Sigmoid colon (tissue), 7 donors: ENCODE measurements at regions of chr14 and their contacts with region 1.

Region 1: DNA sequence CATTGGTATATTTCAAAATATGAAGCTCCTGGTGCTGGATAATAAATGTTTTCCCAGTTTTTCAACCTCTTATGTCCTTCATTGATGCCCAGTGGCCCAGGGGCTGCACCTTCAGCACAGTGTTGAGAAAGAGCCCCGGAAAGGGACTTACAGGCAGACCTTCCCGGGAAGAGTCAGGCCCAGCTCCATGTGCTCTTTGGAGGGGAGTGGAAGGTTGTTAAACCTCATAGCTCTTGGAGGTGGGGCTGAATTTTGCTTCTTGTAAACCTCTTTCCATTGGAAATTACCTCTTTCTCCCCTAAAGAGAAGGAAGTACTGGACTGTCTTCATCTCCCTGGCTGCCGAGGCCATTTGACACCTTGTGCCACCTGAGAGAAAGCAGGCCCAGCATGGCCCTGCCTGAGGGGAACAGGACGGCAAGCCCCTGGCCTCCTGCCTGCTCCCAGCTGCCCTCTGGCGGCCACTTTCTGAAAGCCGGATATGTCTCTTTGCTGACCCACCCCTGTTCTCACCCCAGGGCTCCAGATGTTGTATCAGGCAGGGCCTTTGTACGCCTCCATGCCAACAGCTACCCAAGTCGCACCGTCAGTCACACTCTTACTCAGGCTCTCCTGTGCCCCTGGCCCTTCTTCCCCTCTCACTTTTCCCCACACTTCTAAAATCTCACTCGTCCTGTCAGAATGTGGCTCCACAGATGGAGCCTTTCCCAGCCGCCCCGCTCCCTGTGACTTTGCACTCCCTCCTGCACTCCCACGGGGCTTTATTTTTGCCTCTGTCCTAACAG is 43.0 kb downstream of the EVL start:
- DNase-seq: peak; percentile 88
- H3K4me3 ChIP-seq: no peak overlapping the region
- H3K27ac ChIP-seq: no peak overlapping the region
- H3K4me1 ChIP-seq: peaks cover 0 to 67% (median 52%) of the 10 kb centered on the region in 4 donors
- H3K27me3 ChIP-seq: no peaks in the 10 kb centered on the region
- CTCF ChIP-seq: peak; percentile 79 to 91 (median 84)
- EP300 ChIP-seq: no peak
- POLR2A ChIP-seq: no peak

Region 2: DNA sequence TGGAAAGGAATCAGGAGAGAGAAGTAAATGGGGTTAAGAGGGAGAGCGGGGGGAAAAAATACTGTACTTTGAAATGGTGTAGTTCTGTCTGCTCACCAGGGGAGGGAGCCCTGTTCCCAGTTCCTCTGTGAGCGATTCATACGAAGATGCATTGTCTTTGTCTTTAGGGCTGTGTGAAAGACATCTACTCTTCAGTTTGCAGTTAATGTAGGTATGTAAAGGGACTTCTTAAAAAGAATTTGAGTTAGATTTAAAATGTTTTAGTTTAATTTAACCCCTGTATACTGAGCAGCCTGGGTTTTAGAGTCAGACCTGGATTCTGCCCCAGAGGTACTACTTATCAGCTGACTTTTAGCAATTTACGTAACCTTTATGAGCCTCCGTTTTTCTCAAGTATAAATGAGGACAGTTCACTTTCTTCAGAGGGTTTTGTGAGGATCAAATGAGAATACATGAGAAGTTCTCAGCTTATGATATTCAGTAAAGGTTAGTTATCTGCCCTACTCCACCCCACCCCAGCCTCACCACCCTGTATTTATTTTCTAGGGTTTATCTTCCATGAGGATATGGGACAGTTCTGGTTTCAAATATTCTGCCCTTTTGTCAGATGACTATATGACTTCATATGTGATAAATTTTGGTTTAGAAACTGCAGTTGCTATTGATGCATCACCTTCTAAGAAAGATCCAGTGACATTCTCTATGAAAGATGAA is 125.5 kb before region 1 on chr14:
- intact Hi-C with region 1: loop called (anchors 1 kb)
- DNase-seq: no peak
- H3K4me3 ChIP-seq: no peak overlapping the region
- H3K27ac ChIP-seq: no peak overlapping the region
- H3K4me1 ChIP-seq: peaks cover 0 to 4% (median 0%) of the 10 kb centered on the region in 4 donors
- H3K27me3 ChIP-seq: no peaks in the 10 kb centered on the region
- CTCF ChIP-seq: peak; percentile 86 to 94 (median 90)
- EP300 ChIP-seq: no peak
- POLR2A ChIP-seq: no peak

Region 3: DNA sequence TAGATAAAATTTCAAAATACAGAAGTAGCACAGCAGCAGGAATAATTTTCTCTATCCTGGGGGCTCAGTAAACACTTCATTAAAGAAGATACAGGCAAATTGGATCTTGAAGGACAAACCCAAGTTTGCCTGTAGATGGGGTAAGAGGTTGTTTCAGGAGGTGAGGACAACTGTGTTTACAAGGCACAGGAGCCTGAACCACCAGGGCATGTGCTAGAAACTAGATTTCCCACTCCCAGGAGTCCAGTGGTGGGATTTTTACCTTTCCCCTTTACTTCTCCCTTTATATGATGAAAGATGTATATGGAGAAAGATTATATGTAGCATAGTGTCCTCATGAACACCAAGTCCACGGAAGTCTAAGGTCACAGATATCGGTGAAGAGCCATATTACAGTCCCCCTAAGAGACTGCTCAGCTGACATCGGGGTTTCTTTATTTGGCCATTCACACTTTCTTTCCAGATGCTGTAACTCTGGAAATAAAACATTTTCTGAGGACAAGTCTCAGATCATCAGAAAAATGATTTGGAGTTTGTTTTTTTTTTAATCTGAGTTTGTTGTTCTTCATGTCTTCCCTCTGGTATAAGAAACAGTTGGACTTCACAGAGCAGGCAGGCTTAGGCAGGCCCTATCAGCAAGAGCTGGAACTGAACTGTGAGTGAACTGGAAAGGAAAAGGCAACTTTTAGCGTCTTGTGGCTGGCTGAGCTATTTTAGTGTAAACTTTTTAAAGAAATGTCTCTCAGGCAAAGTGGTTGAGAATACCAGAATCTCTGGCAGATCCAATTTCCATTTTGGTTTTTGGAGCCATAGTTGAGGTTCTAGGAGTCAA is 51.1 kb before region 1 on chr14:
- intact Hi-C with region 1: loop called (anchors 5 kb)
- DNase-seq: no peak
- H3K4me3 ChIP-seq: no peak overlapping the region
- H3K27ac ChIP-seq: peak overlapping the region in 1 of 4 donors; percentile 26
- H3K4me1 ChIP-seq: peaks cover 0 to 12% (median 0%) of the 10 kb centered on the region in 4 donors
- H3K27me3 ChIP-seq: no peaks in the 10 kb centered on the region
- CTCF ChIP-seq: peak in 1 of 4 experiments; percentile 18
- EP300 ChIP-seq: no peak
- POLR2A ChIP-seq: no peak